Right ventricle myocardium inferior (tissue), 1 donor: ENCODE measurements at regions of chr1 and their contacts with region 1.

Region 1: GRCh38 chr1:89198491-89199072 is at the start of gene GBP4:
- DNase-seq: peak; percentile 77
- ATAC-seq: peak; percentile 80
- total RNA-seq, gene GBP4: 5.9 TPM

Region 2: GRCh38 chr1:89129911-89130310 is 68.7 kb before region 1 on chr1:
- intact Hi-C with region 1: loop called (anchors 5 kb)
- DNase-seq: no peak
- ATAC-seq: no peak

Region 3: DNA sequence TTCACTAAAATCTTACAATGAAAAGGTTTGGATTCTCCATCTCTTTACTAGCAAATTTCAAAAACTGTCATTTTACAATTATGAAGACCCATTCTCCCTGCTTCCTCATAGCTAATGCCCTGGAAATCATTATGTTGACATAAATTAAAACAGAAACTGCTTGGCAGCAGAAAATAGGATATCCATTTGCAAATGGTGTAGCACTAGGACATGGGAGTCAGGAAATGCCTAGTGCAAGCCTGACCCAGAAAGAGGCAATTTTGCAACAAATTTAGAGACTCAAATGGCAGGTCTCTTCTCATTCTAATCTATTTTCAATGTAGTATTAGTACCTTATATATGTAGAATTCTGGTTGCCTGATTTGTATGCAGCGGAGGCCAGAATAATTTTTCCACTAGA is 71.8 kb after region 1 on chr1:
- intact Hi-C with region 1: no loop called
- DNase-seq: no peak
- ATAC-seq: no peak